ENCODE measurements at regions of chr17 and their contacts with region 1.

Region 1: GRCh38 chr17:50283246-50283645 is 9.0 kb downstream of the TMEM92 start:
- DNase-seq: no peak
- H3K4me3 ChIP-seq: no peak overlapping the region
- H3K27ac ChIP-seq: no peak overlapping the region
- H3K4me1 ChIP-seq: peaks cover 16% of the 10 kb centered on the region
- H3K27me3 ChIP-seq: no peaks in the 10 kb centered on the region
- CTCF ChIP-seq: no peak

Region 2: GRCh38 chr17:50209472-50210239 is 73.6 kb before region 1 on chr17:
- CTCF ChIA-PET with region 1: no interaction called
- dilution Hi-C with region 1: no loop called
- in situ Hi-C with region 1: loop called in 1 of 2 experiments (anchors 5 kb)
- intact Hi-C with region 1: no loop called
- DNase-seq: no peak
- H3K4me3 ChIP-seq: no peak overlapping the region
- H3K27ac ChIP-seq: no peak overlapping the region
- H3K4me1 ChIP-seq: peaks cover 18% of the 10 kb centered on the region
- H3K27me3 ChIP-seq: no peaks in the 10 kb centered on the region
- CTCF ChIP-seq: no peak

Region 3: DNA sequence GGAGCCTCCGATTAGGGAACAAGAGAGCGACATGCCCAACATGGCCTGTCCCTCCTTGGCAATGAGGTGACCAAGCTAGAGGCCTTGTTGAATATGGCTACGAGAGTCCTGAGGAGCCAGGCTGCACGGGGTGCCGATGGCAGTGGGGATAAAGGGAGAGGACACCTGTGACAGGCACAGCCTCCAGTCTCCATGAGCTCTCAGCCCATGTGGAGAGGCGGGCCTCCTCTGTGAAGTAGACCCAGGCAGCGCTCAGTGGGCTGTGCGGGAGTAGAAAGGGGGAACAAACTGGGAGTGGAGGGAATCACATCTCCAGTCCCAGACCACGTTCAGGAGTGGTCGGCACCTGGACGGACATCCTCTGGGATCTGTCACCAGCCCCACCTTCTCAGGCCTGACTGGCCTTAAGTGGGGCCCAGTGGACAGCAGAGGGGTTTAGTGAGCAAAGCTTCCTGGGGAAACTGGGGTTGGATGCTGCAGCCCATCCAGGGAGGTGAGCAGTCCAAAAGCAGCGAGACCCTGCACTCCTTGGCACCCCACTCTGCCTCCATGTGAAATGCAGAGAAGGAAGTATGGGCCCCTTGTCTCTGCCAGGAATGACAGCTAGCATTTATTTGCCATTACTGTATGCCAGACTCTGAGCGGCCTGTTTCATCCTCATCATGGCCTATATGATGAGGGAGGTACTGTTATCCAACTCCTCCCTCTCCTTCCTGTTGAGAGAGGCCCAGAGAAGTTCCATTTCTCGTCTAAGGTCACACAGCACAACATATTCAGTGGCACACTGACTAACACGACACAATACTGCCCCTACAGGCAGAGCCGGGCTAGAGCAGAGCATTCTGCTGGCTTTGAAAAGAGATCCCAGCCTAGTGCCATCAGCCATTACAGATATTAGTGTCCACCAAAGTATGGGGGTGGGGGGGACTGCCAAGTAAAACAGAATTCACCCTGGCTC is 13.5 kb before region 1 on chr17:
- CTCF ChIA-PET with region 1: no interaction called
- dilution Hi-C with region 1: no loop called
- in situ Hi-C with region 1: no loop called
- intact Hi-C with region 1: no loop called
- DNase-seq: peak; percentile 41
- H3K4me3 ChIP-seq: no peak overlapping the region
- H3K27ac ChIP-seq: no peak overlapping the region
- H3K4me1 ChIP-seq: peaks cover 24% of the 10 kb centered on the region
- H3K27me3 ChIP-seq: no peaks in the 10 kb centered on the region
- CTCF ChIP-seq: peak; percentile 82 to 99

Region 4: GRCh38 chr17:50318501-50319285 is 35.4 kb after region 1 on chr17:
- CTCF ChIA-PET with region 1: no interaction called
- dilution Hi-C with region 1: no loop called
- in situ Hi-C with region 1: no loop called
- intact Hi-C with region 1: no loop called
- DNase-seq: peak; percentile 73
- H3K4me3 ChIP-seq: no peak overlapping the region
- H3K27ac ChIP-seq: no peak overlapping the region
- H3K4me1 ChIP-seq: peaks cover 33% of the 10 kb centered on the region
- H3K27me3 ChIP-seq: no peaks in the 10 kb centered on the region
- CTCF ChIP-seq: peak in 1 of 2 donors; percentile 57

Measured in mammary epithelial cell (primary cell).